Naive thymus-derived CD4-positive, alpha-beta T cell (primary cell): ENCODE measurements at regions of chr14 and their contacts with region 1.

Region 1: GRCh38 chr14:102591889-102592763 is at the start of gene RCOR1:
- DNase-seq: peak; percentile 95 to 98 (median 98)
- ATAC-seq: peak; percentile 93
- H3K4me3 ChIP-seq: peak within 1 kb of the TSS; percentile 80
- H3K4me3 Mint-ChIP-seq: peak within 1 kb of the TSS; percentile 86 to 96 (median 93)
- H3K27ac ChIP-seq: peak within 1 kb of the TSS; percentile 99
- H3K27ac Mint-ChIP-seq: peak within 1 kb of the TSS; percentile 90 to 98 (median 96)
- H3K4me1 ChIP-seq: peaks cover 10 to 12% of the 10 kb centered on the region in 2 donors
- H3K4me1 Mint-ChIP-seq: peaks cover 15 to 34% (median 24%) of the 10 kb centered on the region in 7 donors
- H3K27me3 ChIP-seq: no peaks in the 10 kb centered on the region
- H3K27me3 Mint-ChIP-seq: peaks cover 0 to 16% (median 0%) of the 10 kb centered on the region in 5 donors
- total RNA-seq, gene RCOR1: 19.0 to 34.4 (median 23.7) TPM

Region 2: GRCh38 chr14:101761032-101761880 is 830.9 kb before region 1 on chr14 and contains the start of gene PPP2R5C:
- CTCF ChIA-PET with region 1: no interaction called
- POLR2A ChIA-PET with region 1: interaction called, 3 read pairs
- intact Hi-C with region 1: loop called in 1 of 2 experiments (anchors 1 kb)
- DNase-seq: peak; percentile 73 to 90 (median 87)
- ATAC-seq: peak; percentile 73
- H3K4me3 ChIP-seq: peak within 1 kb of the TSS; percentile 94
- H3K4me3 Mint-ChIP-seq: peak within 1 kb of the TSS; percentile 89 to 96 (median 93)
- H3K27ac ChIP-seq: peak within 1 kb of the TSS; percentile 91
- H3K27ac Mint-ChIP-seq: peak within 1 kb of the TSS; percentile 69 to 95 (median 91)
- H3K4me1 ChIP-seq: peaks cover 11 to 14% of the 10 kb centered on the region in 2 donors
- H3K4me1 Mint-ChIP-seq: peaks cover 30 to 56% (median 38%) of the 10 kb centered on the region in 7 donors
- H3K27me3 ChIP-seq: no peaks in the 10 kb centered on the region
- H3K27me3 Mint-ChIP-seq: peaks cover 0 to 11% (median 0%) of the 10 kb centered on the region in 5 donors
- total RNA-seq, gene PPP2R5C: 266 to 449 (median 405) TPM

Region 3: DNA sequence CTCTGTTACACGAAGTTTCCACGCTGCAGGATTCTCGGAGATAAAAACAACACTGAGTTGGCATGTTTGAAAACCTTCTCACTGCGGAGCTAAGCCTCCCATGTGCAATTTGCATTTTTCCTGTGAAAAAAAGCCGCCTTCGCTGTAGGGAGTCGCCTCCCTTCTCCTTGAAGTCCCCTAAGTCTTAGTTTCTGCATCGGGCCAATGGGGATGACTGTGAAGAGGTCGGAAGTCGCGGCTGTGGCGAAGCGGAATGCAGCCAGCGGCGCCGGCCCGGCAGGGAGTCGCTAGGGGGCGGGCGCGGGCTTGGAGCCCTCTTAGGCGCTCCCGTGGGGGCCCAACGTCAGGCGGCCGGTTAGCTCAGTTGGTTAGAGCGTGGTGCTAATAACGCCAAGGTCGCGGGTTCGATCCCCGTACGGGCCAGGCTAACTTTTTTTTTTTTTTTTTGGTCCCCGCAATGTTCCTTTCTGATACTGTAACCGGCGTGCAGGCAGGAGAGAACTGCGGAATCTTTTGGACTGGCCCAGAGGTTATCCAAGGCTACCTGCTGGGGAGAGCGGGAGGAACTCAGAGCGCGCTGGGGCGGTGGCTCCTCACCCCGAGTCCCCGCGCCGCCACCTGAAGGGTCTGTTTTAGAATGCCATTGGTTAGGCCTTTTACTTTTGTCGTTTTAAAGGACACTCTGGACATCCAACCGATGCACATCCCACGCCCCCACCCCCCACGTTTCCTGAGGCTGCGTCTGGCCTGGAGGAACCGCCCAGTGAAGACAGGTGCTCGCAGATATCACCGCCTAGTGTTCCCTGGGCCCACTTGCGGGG is 275.2 kb before region 1 on chr14:
- CTCF ChIA-PET with region 1: no interaction called
- POLR2A ChIA-PET with region 1: no interaction called
- intact Hi-C with region 1: loop called (anchors 1 to 5 kb)
- DNase-seq: peak; percentile 90 to 99 (median 95)
- ATAC-seq: peak; percentile 77
- H3K4me3 ChIP-seq: peak overlapping the region; percentile 84
- H3K4me3 Mint-ChIP-seq: peak overlapping the region; percentile 91 to 99 (median 97)
- H3K27ac ChIP-seq: peak overlapping the region; percentile 62
- H3K27ac Mint-ChIP-seq: peak overlapping the region; percentile 95 to 99 (median 98)
- H3K4me1 ChIP-seq: peaks cover 37 to 43% of the 10 kb centered on the region in 2 donors
- H3K4me1 Mint-ChIP-seq: peaks cover 34 to 76% (median 64%) of the 10 kb centered on the region in 7 donors
- H3K27me3 ChIP-seq: no peaks in the 10 kb centered on the region
- H3K27me3 Mint-ChIP-seq: peaks cover 0 to 6% (median 0%) of the 10 kb centered on the region in 5 donors

Region 4: GRCh38 chr14:102524466-102525218 is 67.5 kb before region 1 on chr14:
- CTCF ChIA-PET with region 1: interaction called, 5 read pairs
- POLR2A ChIA-PET with region 1: interaction called, 6 read pairs
- intact Hi-C with region 1: loop called (anchors 1 kb)
- DNase-seq: peak; percentile 75 to 99 (median 86)
- ATAC-seq: peak; percentile 92
- H3K4me3 ChIP-seq: peak overlapping the region; percentile 69
- H3K4me3 Mint-ChIP-seq: peak overlapping the region; percentile 73 to 90 (median 85)
- H3K27ac ChIP-seq: peak overlapping the region; percentile 60
- H3K27ac Mint-ChIP-seq: peak overlapping the region; percentile 21 to 94 (median 78)
- H3K4me1 ChIP-seq: peaks cover 16 to 18% of the 10 kb centered on the region in 2 donors
- H3K4me1 Mint-ChIP-seq: peaks cover 20 to 32% (median 29%) of the 10 kb centered on the region in 7 donors
- H3K27me3 ChIP-seq: no peaks in the 10 kb centered on the region
- H3K27me3 Mint-ChIP-seq: no peaks in the 10 kb centered on the region

Region 5: GRCh38 chr14:102694530-102695166 is 102.5 kb after region 1 on chr14:
- CTCF ChIA-PET with region 1: interaction called, 3 read pairs
- POLR2A ChIA-PET with region 1: no interaction called
- intact Hi-C with region 1: loop called in 1 of 2 experiments (anchors 5 kb)
- DNase-seq: peak in 8 of 9 donors; percentile 45 to 71 (median 64)
- ATAC-seq: peak; percentile 87
- H3K4me3 ChIP-seq: no peak overlapping the region
- H3K4me3 Mint-ChIP-seq: no peak overlapping the region
- H3K27ac ChIP-seq: no peak overlapping the region
- H3K27ac Mint-ChIP-seq: peak overlapping the region in 3 of 9 donors; percentile 15 to 60 (median 43)
- H3K4me1 ChIP-seq: peaks cover 0 to 3% of the 10 kb centered on the region in 2 donors
- H3K4me1 Mint-ChIP-seq: peaks cover 25 to 50% (median 31%) of the 10 kb centered on the region in 7 donors
- H3K27me3 ChIP-seq: no peaks in the 10 kb centered on the region
- H3K27me3 Mint-ChIP-seq: no peaks in the 10 kb centered on the region

Region 6: DNA sequence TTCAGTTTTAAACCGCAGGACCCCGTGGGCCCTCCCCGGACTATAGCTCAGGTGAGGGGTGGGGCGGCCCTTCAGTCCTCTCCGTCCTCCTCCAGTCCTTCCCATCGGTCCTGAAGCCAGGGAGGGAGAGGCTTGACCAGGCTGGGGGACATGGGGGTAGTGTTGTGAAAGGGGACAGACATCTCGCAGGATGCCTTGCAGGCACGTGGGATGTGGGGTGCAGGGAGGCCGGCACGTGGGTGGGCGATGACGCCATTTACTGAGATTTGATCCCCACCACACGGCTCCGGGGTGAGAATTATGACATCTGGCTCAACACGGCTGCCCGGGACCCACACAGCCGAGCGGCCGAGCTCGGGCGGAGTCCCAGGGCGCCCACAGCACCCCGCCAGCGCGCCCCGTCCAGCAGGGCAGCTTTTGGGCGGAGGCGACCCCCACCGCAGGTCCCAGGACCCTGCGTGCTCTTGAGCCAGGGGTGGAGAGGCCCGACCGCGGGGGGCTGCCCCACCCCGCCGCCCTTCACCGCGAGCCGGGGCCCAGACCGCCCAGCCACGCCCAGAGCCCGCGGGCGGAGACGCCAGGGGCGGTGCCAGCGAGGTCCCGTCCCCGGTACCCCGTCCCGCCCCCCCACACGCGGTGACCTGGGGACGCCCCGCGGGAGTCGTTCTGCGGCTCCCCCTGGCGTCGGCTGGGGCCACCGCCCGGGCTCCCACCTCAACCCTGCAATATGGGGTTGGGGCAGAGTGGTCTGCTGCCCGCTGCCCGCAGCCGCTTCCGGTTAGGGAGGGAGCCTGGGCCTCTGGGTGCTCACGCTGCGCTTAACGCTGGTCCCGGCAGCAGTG is 499.1 kb after region 1 on chr14:
- CTCF ChIA-PET with region 1: no interaction called
- POLR2A ChIA-PET with region 1: no interaction called
- intact Hi-C with region 1: loop called in 1 of 2 experiments (anchors 10 kb)
- DNase-seq: peak; percentile 38 to 80 (median 64)
- ATAC-seq: peak; percentile 94
- H3K4me3 ChIP-seq: peak overlapping the region; percentile 43
- H3K4me3 Mint-ChIP-seq: peak overlapping the region; percentile 14 to 80 (median 62)
- H3K27ac ChIP-seq: no peak overlapping the region
- H3K27ac Mint-ChIP-seq: no peak overlapping the region
- H3K4me1 ChIP-seq: no peaks in the 10 kb centered on the region
- H3K4me1 Mint-ChIP-seq: peaks cover 0 to 3% (median 0%) of the 10 kb centered on the region in 7 donors
- H3K27me3 ChIP-seq: no peaks in the 10 kb centered on the region
- H3K27me3 Mint-ChIP-seq: peaks cover 0 to 11% (median 5%) of the 10 kb centered on the region in 5 donors